Sciatic nerve (tissue), 2 donors: ENCODE measurements at regions of chr1 and their contacts with region 1.

Region 1: DNA sequence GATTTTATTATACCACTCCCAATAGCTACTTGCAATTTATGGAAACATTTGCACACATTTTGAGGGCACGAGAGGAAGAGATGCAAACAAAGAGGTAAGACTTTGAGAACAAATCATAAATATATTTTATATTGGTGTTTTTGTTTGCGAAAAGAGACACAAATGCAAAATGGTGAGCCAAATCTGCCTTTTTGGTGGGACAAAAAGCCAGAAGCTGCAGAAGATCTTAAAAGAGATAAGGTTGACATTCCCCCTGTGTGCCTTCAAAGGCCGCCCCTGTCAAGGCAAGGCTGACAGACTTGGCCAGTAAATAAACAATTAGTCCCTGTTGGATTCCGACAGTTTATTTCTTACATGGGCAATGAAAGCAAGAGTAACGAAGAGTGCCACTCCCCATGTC is 122.8 kb downstream of the LBR start:
- DNase-seq: no peak
- ATAC-seq: no peak

Region 2: DNA sequence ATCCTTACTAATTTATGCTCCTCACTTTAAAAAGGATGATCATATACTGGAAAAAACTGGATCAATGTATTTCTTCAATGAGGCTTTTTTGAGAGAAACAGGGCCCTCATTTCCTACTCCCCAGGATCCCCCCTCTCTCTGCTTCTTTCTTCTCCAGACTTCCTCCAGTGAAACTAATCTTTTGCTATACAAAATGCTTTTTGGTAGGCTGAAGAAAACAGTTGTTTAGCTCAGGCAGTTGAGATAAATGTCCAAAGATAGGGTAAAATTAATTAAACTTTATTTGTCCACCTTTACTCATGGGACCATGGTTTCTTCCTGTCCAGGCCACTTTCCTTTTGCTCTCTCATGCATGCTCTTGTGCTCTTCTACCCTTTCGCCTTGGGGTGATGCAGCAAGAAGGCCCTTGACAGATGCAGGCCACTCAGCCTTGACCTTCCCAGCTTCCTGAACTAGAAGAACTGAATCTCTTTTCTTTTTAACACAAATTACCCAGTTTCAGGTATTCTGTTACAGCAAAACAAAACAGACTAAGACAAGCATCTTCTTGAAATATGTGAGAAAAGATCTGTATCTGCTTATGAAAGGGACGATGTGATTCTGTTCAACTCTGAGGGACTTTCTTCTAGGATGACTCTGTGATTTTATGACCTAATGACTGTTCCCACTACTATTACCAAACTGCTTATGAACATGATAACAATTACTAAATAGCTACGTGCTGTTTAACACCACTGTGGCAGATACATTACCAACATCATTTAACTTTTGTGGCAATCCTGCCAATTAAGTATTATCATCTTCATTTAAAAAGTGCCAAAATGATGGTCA is 1038.7 kb before region 1 on chr1:
- intact Hi-C with region 1: loop called (anchors 5 kb)
- DNase-seq: no peak
- ATAC-seq: no peak

Region 3: DNA sequence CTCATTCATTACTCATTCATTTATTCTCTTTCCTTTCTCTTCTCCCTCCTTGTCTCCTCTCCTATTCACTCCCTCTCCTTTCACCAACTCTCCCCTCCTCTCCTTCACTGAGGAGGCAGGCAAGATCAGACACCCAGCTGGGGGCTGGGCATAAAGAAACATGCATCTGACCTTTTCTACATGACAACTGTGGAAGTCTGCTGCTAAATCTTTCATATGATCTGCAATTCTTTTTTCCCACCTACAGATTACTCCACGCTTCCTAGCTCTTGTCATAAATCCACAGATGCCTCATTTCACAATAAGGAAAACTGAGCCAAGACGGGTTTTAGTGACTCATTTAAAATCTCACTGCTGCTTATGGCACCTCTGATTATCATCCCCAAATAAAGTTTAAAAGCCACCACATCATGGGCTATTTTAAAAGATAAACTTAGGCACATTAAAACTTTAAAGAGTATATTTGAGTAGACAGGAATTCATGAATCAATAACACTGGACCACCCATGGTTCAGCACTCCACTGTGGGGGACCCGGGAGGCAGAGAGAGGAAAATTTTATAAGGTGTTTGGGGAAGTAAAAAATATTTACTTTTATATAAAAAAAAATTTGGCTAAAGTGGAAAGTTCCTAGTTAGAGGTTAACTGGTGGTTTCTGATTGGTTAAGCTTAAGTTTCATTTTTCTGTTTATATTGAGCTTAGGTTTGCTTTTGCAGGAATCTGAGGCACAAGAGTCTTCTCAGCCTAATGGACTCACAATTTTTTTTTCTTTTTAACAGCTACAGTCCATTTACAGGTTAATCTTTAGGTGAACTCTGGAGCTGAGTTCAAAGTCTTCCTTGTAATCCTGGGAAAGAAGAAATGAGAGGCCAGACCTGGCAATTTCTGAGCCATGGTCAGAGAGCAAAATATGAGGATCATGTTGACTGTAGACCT is 431.3 kb before region 1 on chr1:
- intact Hi-C with region 1: no loop called
- DNase-seq: no peak
- ATAC-seq: no peak

Region 4: GRCh38 chr1:225366552-225366951 is 61.6 kb after region 1 on chr1:
- intact Hi-C with region 1: no loop called
- DNase-seq: no peak
- ATAC-seq: no peak